Endothelial cell of umbilical vein (primary cell): ENCODE measurements at regions of chr13 and their contacts with region 1.

Region 1: GRCh38 chr13:77002590-77003190 is 10.8 kb downstream of the CLN5 start:
- DNase-seq: peak; percentile 57
- H3K4me3 ChIP-seq: no peak overlapping the region
- H3K27ac ChIP-seq: no peak overlapping the region
- H3K4me1 ChIP-seq: no peaks in the 10 kb centered on the region
- H3K27me3 ChIP-seq: no peaks in the 10 kb centered on the region
- CTCF ChIP-seq: peak; percentile 55 to 67
- POLR2A ChIP-seq: no peak

Region 2: GRCh38 chr13:75687150-75687763 is 1315.4 kb before region 1 on chr13:
- CTCF ChIA-PET with region 1: interaction called, 14 read pairs
- POLR2A ChIA-PET with region 1: no interaction called
- dilution Hi-C with region 1: no loop called
- intact Hi-C with region 1: no loop called
- DNase-seq: peak; percentile 41
- H3K4me3 ChIP-seq: no peak overlapping the region
- H3K27ac ChIP-seq: no peak overlapping the region
- H3K4me1 ChIP-seq: no peaks in the 10 kb centered on the region
- H3K27me3 ChIP-seq: no peaks in the 10 kb centered on the region
- CTCF ChIP-seq: peak; percentile 35 to 50
- POLR2A ChIP-seq: no peak

Region 3: DNA sequence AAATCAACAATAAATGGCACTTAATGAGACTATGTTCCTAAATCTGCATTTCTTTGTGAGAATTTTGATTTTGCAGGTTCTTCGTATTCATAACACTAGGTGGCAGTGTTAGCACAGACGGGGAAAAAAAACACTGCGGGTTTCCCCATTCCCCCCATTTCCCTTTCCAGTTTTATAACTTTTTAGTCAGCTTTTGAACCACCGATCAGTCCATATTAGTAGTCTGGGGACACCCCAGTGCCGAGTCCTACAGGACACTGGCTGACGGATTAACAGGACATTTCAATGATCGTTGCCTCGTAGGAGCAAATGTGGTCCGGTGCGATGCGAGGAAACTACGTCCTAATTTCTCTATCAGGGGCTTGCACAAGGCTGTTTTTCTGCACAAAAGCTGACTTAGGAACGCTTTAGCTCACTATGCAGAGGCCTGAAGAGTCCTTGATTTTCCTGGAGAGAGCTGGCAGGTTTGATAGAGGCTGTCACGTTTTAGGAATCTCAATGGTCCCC is 1132.2 kb before region 1 on chr13:
- CTCF ChIA-PET with region 1: interaction called, 10 read pairs
- POLR2A ChIA-PET with region 1: no interaction called
- dilution Hi-C with region 1: no loop called
- intact Hi-C with region 1: no loop called
- DNase-seq: peak; percentile 36
- H3K4me3 ChIP-seq: peak overlapping the region; percentile 28 to 74 (median 37)
- H3K27ac ChIP-seq: no peak overlapping the region
- H3K4me1 ChIP-seq: peaks cover 4% of the 10 kb centered on the region
- H3K27me3 ChIP-seq: peaks cover 0 to 2% of the 10 kb centered on the region in 2 experiments
- CTCF ChIP-seq: peak; percentile 58 to 59
- POLR2A ChIP-seq: no peak

Region 4: DNA sequence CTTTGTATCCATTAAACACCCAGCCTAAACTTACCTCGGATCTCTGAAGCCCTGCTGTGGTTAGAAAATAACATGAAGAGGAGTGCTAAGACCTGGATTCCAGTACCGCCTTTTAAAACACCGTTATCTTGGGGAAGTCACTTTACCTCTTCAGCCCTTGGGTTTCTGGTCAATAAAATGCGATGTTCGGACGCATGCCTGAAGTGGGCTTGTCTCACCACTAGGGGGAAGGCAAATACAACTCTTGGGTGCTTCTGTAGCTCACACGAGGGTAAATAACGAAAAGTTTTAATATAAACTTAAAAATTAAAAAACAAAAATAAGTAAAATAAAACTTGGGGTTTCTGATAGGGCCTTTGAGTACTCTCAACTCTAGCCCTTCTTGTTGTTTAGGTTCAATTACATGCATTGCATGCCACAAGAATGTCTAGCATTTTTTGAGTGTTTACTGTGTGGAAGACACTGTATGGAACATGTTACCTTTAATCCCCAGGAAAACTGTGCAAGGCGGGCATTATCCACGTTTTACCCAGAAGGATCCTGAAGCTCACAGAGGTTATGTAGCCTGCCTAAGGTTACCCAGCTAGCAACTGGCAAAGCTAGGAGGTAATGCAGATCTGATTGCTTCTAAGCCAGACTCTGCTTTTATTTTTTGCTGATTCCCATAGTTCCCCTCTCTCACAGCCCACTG is 1126.2 kb before region 1 on chr13:
- CTCF ChIA-PET with region 1: interaction called, 12 read pairs
- POLR2A ChIA-PET with region 1: no interaction called
- dilution Hi-C with region 1: no loop called
- intact Hi-C with region 1: no loop called
- DNase-seq: peak; percentile 74
- H3K4me3 ChIP-seq: no peak overlapping the region
- H3K27ac ChIP-seq: no peak overlapping the region
- H3K4me1 ChIP-seq: no peaks in the 10 kb centered on the region
- H3K27me3 ChIP-seq: peaks cover 0 to 2% of the 10 kb centered on the region in 2 experiments
- CTCF ChIP-seq: peak; percentile 76 to 78
- POLR2A ChIP-seq: no peak

Region 5: GRCh38 chr13:76667551-76667950 is 335.1 kb before region 1 on chr13:
- CTCF ChIA-PET with region 1: interaction called, 5 read pairs
- POLR2A ChIA-PET with region 1: no interaction called
- dilution Hi-C with region 1: no loop called
- intact Hi-C with region 1: loop called (anchors 5 kb)
- DNase-seq: peak; percentile 89
- H3K4me3 ChIP-seq: no peak overlapping the region
- H3K27ac ChIP-seq: no peak overlapping the region
- H3K4me1 ChIP-seq: no peaks in the 10 kb centered on the region
- H3K27me3 ChIP-seq: no peaks in the 10 kb centered on the region
- CTCF ChIP-seq: peak; percentile 21 to 39
- POLR2A ChIP-seq: no peak

Region 6: DNA sequence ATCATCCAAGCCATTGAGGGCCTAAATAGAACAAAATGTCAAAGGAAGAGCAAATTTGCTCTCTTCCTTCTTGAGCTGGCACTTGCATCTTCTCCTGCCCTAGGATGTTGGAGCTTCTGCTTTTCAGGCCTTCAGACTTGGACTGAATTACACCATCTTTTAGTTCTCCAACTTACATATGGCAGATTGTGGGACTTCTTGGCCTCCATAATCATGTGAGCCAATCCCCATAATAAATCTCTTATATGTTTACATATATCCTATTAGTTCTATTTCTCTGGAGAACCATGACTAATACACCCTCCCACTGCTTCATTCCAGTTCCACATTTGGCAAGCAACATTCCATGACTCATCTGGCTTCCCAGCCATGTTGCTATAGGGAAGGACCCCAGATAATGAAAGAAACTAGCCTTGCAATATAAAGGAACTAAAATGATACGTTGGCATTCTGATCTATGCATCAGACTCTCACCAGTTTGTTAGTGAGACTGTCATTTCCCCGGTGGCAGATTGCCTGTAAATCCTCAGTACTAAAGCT is 65.3 kb before region 1 on chr13:
- CTCF ChIA-PET with region 1: no interaction called
- POLR2A ChIA-PET with region 1: no interaction called
- dilution Hi-C with region 1: no loop called
- intact Hi-C with region 1: no loop called
- DNase-seq: peak; percentile 86
- H3K4me3 ChIP-seq: no peak overlapping the region
- H3K27ac ChIP-seq: no peak overlapping the region
- H3K4me1 ChIP-seq: no peaks in the 10 kb centered on the region
- H3K27me3 ChIP-seq: no peaks in the 10 kb centered on the region
- CTCF ChIP-seq: no peak
- POLR2A ChIP-seq: no peak

Region 7: DNA sequence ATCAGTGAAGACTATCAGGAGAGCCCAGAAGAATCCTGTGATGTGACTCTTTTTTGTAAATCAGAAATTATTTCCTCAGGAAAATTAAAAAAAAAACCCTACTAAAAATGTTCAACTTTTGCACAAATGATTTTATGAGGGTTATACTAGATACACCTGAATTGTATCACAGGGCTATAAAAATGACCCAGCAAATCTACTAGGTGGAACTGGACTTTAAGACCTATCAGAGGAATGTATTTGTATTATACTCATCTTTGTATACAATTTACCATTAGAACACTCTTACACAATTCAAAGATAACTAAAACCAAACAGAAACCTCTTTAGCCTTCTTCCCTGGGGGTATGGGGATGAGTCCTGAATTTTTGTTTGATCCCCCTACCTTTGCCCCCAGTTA is 17.1 kb after region 1 on chr13:
- CTCF ChIA-PET with region 1: interaction called, 11 read pairs
- POLR2A ChIA-PET with region 1: no interaction called
- dilution Hi-C with region 1: no loop called
- intact Hi-C with region 1: no loop called
- DNase-seq: no peak
- H3K4me3 ChIP-seq: no peak overlapping the region
- H3K27ac ChIP-seq: no peak overlapping the region
- H3K4me1 ChIP-seq: peaks cover 12% of the 10 kb centered on the region
- H3K27me3 ChIP-seq: no peaks in the 10 kb centered on the region
- CTCF ChIP-seq: no peak
- POLR2A ChIP-seq: no peak